Activated T-helper 1 cell treated with anti-CD3 and anti-CD28 coated beads, Interleukin-12 subunit alpha, Interleukin-12 subunit beta, Interleukin-2, Interleukin-4 antibody, amounts not matched to agents 30 ng/mL and 10 ng/mL and 1 ng/mL, durations not matched to agents 14 hours and 24 hours and 36 hours (primary cell): ENCODE measurements at regions of chr1 and their contacts with region 1.

Region 1: DNA sequence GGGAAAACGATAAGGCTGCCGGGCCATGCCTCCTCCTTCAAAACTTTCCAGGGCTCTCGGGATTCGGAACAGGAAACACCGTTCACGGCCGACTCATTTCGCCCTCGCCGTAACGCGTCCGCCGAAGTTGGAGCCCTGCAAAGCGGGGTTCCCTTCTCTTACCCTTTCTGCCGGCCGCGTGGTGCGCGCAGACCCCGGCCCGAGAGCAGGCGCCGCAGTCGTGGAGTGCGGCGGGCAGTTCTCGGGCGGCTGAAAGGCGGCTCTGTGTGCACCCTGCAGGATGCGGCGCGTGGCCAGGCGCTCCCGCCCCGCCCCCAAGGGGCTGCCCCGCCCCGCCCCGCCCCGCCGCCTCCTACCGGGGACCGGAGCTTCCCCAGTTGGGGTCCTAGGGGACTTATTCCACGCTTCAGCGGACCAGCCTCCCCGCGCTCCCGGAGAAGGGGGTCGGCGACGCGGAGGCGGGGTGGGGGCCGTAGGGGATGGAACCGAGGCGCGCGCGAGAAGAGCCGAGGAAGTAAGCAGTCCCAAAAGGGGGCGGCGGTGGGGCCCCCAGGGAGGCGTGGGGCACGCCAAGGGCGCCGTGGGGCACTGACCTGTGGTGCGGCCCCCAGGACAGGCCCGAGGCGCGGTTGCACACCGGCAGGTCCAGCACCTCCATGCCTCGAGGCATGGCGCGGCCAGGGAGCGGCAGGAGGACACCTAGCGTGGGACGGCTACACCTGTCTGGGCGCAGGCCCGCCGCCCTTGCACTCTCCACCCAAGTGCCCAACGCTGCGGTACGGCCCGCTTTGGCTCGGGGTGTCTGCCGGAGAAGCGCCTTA is at the start of gene MCOLN2:
- DNase-seq: peak; percentile 52
- H3K4me3 Mint-ChIP-seq: peak within 1 kb of the TSS; percentile 88
- H3K27ac Mint-ChIP-seq: peak within 1 kb of the TSS; percentile 88
- H3K4me1 Mint-ChIP-seq: peaks cover 55% of the 10 kb centered on the region
- H3K27me3 Mint-ChIP-seq: peaks cover 12% of the 10 kb centered on the region
- total RNA-seq, gene MCOLN2: 117 and 119 TPM in 2 replicates

Region 2: GRCh38 chr1:84919461-84919970 is 77.5 kb before region 1 on chr1:
- intact Hi-C with region 1: no loop called
- DNase-seq: no peak
- H3K4me3 Mint-ChIP-seq: no peak overlapping the region
- H3K27ac Mint-ChIP-seq: no peak overlapping the region
- H3K4me1 Mint-ChIP-seq: peaks cover 6% of the 10 kb centered on the region
- H3K27me3 Mint-ChIP-seq: peaks cover 12% of the 10 kb centered on the region

Region 3: DNA sequence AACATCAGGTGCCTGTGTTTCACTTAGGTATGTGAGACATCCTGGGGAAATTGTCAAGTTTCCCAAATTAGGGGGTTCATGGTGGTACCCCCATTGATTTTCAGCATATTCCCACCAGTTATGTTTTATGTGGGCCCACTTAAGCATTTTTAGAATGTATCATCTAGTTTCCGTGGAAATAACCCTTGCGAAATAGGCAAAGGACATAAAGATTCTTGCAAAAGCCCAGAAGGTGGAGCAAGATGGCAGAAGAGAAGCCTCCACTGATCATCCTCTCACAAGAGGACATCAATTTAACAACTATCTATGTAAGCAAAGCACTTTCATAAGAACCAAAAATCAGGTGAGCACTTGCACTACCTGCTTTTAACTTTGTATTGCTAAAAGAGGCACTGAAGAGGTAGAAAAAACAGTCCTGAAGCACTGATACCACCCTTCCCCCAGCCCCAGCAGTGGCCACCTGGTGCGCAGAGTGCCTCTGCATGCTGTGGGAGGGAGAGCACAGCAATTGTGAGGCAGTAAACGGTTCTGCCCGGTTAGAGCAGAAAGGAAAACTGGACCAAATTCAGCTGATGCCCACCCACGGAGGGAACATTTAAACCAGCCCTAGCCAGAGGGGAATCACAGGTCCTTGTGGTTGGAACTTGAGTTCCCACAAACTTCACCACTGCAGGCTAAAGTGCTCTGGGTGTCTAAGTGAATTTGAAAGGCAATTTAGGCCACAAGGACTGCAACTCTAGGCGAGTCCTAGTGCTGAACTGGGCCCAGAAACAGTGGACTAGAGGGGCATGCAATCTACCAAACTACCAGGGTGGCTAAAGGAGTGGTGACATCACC is 23.3 kb before region 1 on chr1:
- intact Hi-C with region 1: loop called (anchors 1 kb)
- DNase-seq: peak; percentile 13
- H3K4me3 Mint-ChIP-seq: peak overlapping the region; percentile 32
- H3K27ac Mint-ChIP-seq: peak overlapping the region; percentile 70
- H3K4me1 Mint-ChIP-seq: peaks cover 82% of the 10 kb centered on the region
- H3K27me3 Mint-ChIP-seq: no peaks in the 10 kb centered on the region

Region 4: DNA sequence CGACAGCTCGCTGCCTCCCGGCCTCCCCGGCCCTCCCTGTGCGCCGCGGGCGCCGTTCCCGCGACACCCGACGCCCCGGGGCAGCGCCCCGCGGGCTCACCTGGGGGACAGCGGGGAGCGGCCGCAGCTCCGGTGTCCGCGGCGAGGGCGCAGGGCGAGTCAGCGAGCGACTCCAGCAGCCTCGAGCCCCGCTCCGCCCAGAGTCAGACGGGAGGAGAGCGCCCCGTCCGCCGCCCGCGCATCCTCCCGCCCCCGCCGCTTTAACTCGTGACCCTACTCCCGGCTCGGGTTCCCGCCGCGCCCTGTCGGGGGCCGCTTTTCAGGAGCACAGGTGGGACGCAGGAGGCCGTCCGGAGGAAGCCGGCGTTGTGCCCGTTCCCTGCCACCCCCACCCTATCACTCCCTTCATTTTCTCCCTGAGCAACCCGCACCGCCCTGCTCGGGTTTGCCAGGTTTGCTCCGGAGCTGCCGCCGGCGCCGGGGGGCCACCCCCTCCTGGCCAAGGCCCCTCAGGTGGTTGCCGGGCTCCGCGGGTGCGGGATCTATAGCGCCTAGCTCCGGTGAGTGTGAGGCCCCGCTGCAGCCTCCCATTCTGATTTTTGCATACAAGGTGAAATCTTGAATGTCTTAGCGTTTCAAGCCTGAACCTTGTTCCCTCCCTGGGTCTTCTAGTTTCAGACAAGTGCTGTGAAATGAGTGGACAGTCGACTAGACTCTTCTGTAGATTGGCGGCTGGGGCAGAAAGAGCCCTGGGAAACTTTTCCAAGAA is 51.4 kb after region 1 on chr1 and contains the start of gene MCOLN3:
- intact Hi-C with region 1: loop called (anchors 2 kb)
- DNase-seq: peak; percentile 28
- H3K4me3 Mint-ChIP-seq: peak within 1 kb of the TSS; percentile 83
- H3K27ac Mint-ChIP-seq: no peak within 1 kb of the TSS
- H3K4me1 Mint-ChIP-seq: peaks cover 37% of the 10 kb centered on the region
- H3K27me3 Mint-ChIP-seq: peaks cover 52% of the 10 kb centered on the region
- total RNA-seq, gene MCOLN3: 1.3 and 1.7 TPM in 2 replicates

Region 5: DNA sequence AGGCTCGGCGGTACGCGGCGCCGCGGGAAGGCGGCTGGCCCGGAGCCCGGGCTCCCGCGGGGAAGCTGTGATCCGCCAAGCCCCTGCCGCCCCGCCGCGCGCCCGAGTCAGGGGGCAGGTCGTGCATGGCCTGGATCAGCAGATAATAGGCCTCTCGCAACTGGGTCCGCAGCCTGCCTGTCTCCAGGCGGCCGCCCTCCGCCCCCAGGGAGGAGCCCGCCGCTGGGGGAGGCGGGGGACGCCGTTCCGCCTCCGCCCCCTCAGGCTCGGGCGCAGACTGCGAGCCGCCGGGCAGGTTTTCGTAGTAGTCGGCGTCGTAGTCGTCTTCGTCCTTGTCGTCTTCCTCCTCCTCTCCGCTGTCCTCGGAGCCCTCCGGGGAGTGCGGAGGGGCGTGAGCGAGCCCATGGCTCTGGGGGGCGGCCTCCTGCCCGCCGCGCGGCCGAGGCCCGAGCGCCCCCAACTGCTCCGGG is 203.8 kb after region 1 on chr1 and contains the start of gene SYDE2:
- intact Hi-C with region 1: loop called (anchors 2 kb)
- DNase-seq: peak; percentile 67
- H3K4me3 Mint-ChIP-seq: peak within 1 kb of the TSS; percentile 94
- H3K27ac Mint-ChIP-seq: peak within 1 kb of the TSS; percentile 88
- H3K4me1 Mint-ChIP-seq: peaks cover 18% of the 10 kb centered on the region
- H3K27me3 Mint-ChIP-seq: peaks cover 40% of the 10 kb centered on the region
- total RNA-seq, gene SYDE2: 0.76 and 0.83 TPM in 2 replicates